ENCODE measurements at regions of chr17 and their contacts with region 1.

Region 1: DNA sequence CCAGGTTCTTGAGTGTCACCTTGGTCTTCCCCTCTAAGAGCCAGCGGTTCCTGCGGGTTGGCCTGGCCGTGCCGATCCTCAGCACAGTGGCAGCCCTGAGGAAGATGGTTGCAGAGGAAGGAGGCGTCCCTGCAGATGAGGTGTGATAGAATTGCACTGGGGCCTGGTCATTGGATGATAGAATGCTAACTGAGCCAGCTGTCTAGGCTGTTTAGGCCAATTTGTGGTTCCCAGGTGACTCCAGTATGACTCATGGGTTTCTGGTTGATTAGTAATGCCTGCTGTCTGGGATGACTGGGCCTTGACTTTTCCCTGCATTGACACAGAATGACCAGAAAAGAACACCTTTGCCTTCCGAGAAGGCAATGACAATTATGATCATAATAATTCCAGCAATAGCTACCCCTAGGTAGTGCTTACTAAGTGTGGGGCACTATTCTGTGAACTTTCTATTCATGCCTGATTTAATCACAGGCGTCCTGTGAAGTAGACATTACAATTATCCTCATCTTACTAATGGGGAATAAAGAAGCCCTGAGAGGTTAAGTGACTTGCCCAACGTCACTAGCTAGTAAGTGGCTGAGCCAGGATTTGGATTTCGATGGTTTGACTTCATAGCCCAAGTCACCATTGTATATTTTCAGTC is 31.5 kb downstream of the USP43 start:
- DNase-seq: no peak
- H3K4me3 Mint-ChIP-seq: no peak overlapping the region
- H3K27ac Mint-ChIP-seq: no peak overlapping the region
- H3K4me1 Mint-ChIP-seq: peaks cover 12% of the 10 kb centered on the region
- H3K27me3 Mint-ChIP-seq: peaks cover 2% of the 10 kb centered on the region

Region 2: DNA sequence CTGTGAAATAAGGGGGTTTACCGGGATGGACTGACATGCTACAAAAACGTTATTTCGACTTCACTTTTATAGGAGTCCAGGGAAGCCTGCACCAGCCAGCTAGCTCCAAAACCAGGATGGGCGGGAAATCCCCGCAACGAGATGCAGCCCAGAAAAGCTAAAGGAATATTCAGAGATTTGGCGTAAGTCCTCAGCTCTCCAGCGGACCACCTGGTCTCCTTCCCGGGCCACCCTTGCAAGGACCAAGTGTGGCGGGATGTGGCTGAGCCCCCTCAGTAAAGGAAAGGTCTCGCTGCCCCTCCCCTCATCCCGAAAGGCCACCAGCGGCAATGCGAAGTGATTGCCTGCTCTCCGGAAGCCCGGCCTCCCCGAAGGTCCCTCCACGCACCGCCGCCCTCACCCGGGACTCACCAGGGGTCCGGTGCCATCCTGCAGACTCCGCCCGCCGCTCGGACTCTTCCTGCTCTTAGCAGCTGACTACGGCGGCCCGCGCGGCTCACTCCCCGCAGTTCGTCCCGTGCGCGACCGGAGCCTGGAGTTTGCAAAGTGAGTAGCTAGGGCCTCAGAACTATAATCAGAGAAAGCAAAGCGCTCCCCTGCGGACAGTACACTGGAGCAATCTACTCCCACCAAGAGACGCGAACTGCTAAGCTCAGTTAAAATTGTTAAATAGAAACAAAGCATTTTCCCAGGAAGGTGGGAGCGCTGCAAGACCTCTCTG is 101.3 kb before region 1 on chr17 and contains the start of gene STX8:
- CTCF ChIA-PET with region 1: interaction called, 19 read pairs
- POLR2A ChIA-PET with region 1: no interaction called
- DNase-seq: peak; percentile 88
- H3K4me3 Mint-ChIP-seq: peak within 1 kb of the TSS; percentile 96
- H3K27ac Mint-ChIP-seq: peak within 1 kb of the TSS; percentile 65
- H3K4me1 Mint-ChIP-seq: peaks cover 25% of the 10 kb centered on the region
- H3K27me3 Mint-ChIP-seq: no peaks in the 10 kb centered on the region
- total RNA-seq, gene STX8: 76.6 to 76.7 TPM

Region 3: DNA sequence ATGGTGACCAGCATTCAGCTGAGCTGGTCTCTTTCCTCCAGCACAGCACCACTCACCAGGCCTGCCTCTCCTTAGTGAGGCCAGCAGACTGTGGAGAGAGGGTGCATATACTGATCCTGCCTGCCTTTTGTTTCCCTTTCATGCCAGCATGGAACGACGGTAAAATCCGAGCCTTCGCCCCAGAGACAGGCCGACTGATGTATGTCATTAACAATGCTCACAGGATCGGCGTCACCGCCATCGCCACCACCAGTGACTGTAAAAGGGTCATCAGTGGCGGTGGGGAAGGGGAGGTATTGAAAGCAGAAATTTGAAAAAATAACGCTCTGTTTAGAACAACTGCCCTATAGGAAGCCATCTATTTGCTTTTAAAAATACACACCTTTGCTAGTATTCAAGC is 44.1 kb before region 1 on chr17:
- CTCF ChIA-PET with region 1: no interaction called
- POLR2A ChIA-PET with region 1: no interaction called
- DNase-seq: no peak
- H3K4me3 Mint-ChIP-seq: no peak overlapping the region
- H3K27ac Mint-ChIP-seq: no peak overlapping the region
- H3K4me1 Mint-ChIP-seq: no peaks in the 10 kb centered on the region
- H3K27me3 Mint-ChIP-seq: peaks cover 11% of the 10 kb centered on the region

Region 4: DNA sequence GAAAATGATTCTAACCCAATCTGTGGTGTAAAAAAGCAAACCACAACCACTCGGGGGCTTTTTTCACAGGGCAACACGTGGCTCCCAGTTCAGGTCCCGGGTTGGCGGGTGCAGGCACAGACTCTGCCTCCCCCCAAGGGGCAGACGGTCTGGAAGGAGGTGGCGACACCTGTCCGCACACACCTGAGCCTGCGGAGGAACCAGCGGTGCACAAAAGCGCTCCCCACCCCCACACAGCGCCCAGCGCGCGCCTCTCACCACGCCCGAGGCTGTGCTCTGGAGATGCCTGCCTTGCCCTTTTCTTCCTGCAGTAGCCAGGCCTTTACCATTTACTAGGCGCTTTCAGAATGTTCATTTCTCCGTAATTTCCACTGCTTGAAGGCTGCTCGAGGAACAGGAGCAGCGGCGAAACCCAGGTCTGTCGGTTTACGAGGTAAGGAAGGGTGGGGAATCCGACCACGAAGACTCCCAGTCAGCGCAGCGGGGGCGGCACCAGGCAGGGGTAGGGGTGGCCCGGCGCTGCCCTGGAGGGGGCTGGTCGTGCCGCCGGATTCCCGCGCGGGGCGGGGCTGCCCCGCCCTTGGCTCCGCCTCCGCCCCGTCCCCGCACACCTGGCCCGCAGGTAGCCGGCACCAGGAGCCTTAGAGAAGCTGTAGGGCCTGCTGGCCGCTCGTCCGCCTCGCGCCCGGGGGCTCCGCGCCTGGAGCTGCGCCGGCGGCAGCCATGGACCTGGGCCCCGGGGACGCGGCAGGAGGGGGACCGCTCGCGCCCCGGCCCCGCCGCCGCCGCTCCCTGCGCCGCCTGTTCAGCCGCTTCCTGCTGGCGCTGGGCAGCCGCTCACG is 31.7 kb before region 1 on chr17 and contains the start of gene USP43:
- CTCF ChIA-PET with region 1: no interaction called
- POLR2A ChIA-PET with region 1: no interaction called
- DNase-seq: peak; percentile 18
- H3K4me3 Mint-ChIP-seq: peak within 1 kb of the TSS; percentile 68
- H3K27ac Mint-ChIP-seq: no peak within 1 kb of the TSS
- H3K4me1 Mint-ChIP-seq: peaks cover 14% of the 10 kb centered on the region
- H3K27me3 Mint-ChIP-seq: peaks cover 52% of the 10 kb centered on the region
- total RNA-seq, gene USP43: 0.25 to 0.30 TPM

Region 5: DNA sequence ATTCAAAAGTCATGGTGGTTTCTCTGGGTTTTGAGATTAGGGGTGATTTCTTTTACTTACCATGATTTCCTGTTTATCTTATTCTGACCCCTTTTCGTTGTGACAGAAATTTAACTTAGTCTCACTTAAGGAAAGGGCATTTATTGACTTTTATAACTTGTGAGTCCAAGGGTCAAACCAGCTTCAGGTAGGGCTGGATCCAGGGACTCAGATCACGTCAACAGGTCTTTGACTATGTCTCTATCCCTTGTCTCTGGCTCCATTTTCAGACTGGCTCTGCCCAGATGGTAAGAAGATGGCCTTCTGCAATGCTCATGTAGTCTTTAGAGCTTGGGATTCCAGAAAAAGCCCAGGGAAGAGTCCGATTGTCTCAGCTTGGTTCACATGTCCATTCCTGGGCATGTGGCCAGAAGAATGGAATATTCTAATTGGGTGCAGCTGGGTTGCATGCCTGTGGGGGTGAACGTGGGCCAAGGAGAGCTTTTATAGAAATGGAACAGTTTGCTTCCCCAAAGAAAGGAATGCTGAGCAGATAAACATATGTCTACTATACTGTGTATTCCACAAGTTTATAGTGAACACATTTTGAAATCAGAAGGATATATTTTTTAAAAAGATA is 18.2 kb before region 1 on chr17:
- CTCF ChIA-PET with region 1: no interaction called
- POLR2A ChIA-PET with region 1: no interaction called
- DNase-seq: no peak
- H3K4me3 Mint-ChIP-seq: no peak overlapping the region
- H3K27ac Mint-ChIP-seq: no peak overlapping the region
- H3K4me1 Mint-ChIP-seq: no peaks in the 10 kb centered on the region
- H3K27me3 Mint-ChIP-seq: peaks cover 11% of the 10 kb centered on the region

Region 6: GRCh38 chr17:9811086-9811485 is 134.2 kb after region 1 on chr17:
- CTCF ChIA-PET with region 1: no interaction called
- POLR2A ChIA-PET with region 1: no interaction called
- DNase-seq: no peak
- H3K4me3 Mint-ChIP-seq: no peak overlapping the region
- H3K27ac Mint-ChIP-seq: no peak overlapping the region
- H3K4me1 Mint-ChIP-seq: no peaks in the 10 kb centered on the region
- H3K27me3 Mint-ChIP-seq: no peaks in the 10 kb centered on the region